Sigmoid colon (tissue), 7 donors: ENCODE measurements at regions of chr1 and their contacts with region 1.

Region 1: DNA sequence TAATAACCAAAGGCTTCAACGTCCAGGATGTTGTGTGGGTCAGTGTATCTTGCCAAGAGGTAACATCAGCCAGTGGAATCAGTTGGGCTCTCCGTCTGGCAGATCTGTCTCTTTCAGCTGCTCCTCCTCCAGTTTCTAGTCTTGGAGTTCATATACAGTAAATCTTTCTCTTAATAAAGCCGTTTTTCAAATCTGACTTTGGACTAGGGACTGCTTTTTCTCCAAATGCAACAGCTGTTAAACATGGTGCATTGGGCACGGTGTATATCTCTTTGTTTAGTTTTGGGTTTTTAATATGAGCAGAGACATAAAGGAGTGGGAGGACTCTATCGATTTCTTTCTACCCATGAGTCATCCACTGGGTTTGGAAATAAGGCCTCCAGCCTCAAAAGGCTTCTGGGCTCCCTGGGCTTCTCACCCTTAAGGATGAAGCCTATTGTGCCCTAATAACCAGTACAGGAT is 85.8 kb downstream of the PBX1 start:
- DNase-seq: no peak
- H3K4me3 ChIP-seq: no peak overlapping the region
- H3K27ac ChIP-seq: peak overlapping the region; percentile 67 to 86 (median 82)
- H3K4me1 ChIP-seq: peaks cover 0 to 92% (median 91%) of the 10 kb centered on the region in 4 donors
- H3K27me3 ChIP-seq: no peaks in the 10 kb centered on the region
- CTCF ChIP-seq: no peak
- EP300 ChIP-seq: peak in 3 of 4 donors; percentile 30 to 79 (median 67)
- POLR2A ChIP-seq: no peak

Region 2: GRCh38 chr1:164699815-164700491 is 55.1 kb after region 1 on chr1:
- intact Hi-C with region 1: loop called (anchors 2 kb)
- DNase-seq: peak; percentile 92
- H3K4me3 ChIP-seq: peak overlapping the region; percentile 8 to 32 (median 12)
- H3K27ac ChIP-seq: peak overlapping the region; percentile 77 to 87 (median 80)
- H3K4me1 ChIP-seq: peaks cover 0 to 85% (median 80%) of the 10 kb centered on the region in 4 donors
- H3K27me3 ChIP-seq: no peaks in the 10 kb centered on the region
- CTCF ChIP-seq: no peak
- EP300 ChIP-seq: peak; percentile 76 to 90 (median 86)
- POLR2A ChIP-seq: no peak

Region 3: DNA sequence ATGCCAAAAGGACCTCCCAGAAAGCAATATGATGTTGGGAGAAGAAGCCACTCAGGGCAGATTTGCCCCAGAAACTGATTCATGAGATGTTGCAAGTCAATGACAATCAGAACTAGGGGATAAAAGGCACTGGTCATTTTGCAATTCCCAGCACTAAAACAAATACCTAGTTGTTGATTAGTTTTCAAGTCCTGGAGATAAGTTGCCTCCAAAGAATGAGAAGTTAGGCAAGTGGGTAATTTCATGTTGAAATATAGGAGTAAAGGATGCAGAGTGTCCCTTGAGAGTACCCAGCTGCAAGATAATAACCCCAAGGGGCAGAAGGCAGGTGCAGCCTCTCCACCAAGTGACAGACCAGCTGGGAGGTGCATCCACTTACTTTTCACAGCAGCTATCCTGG is 277.8 kb after region 1 on chr1:
- intact Hi-C with region 1: loop called (anchors 5 kb)
- DNase-seq: no peak
- H3K4me3 ChIP-seq: no peak overlapping the region
- H3K27ac ChIP-seq: no peak overlapping the region
- H3K4me1 ChIP-seq: peaks cover 0 to 33% (median 28%) of the 10 kb centered on the region in 4 donors
- H3K27me3 ChIP-seq: no peaks in the 10 kb centered on the region
- CTCF ChIP-seq: no peak
- EP300 ChIP-seq: no peak
- POLR2A ChIP-seq: no peak

Region 4: GRCh38 chr1:165006831-165007230 is 362.0 kb after region 1 on chr1:
- intact Hi-C with region 1: no loop called
- DNase-seq: no peak
- H3K4me3 ChIP-seq: no peak overlapping the region
- H3K27ac ChIP-seq: no peak overlapping the region
- H3K4me1 ChIP-seq: peaks cover 0 to 19% (median 7%) of the 10 kb centered on the region in 4 donors
- H3K27me3 ChIP-seq: no peaks in the 10 kb centered on the region
- CTCF ChIP-seq: no peak
- EP300 ChIP-seq: no peak
- POLR2A ChIP-seq: no peak